ENCODE measurements at regions of chr12 and their contacts with region 1.

Region 1: GRCh38 chr12:129911428-129912049 is 7.7 kb upstream of the TMEM132D start:
- DNase-seq: peak; percentile 37
- H3K4me3 Mint-ChIP-seq: no peak overlapping the region
- H3K27ac Mint-ChIP-seq: no peak overlapping the region
- H3K4me1 Mint-ChIP-seq: no peaks in the 10 kb centered on the region
- H3K27me3 Mint-ChIP-seq: no peaks in the 10 kb centered on the region

Region 2: GRCh38 chr12:128969480-128970055 is 942.0 kb before region 1 on chr12:
- CTCF ChIA-PET with region 1: interaction called, 14 read pairs
- DNase-seq: peak; percentile 37
- H3K4me3 Mint-ChIP-seq: no peak overlapping the region
- H3K27ac Mint-ChIP-seq: no peak overlapping the region
- H3K4me1 Mint-ChIP-seq: no peaks in the 10 kb centered on the region
- H3K27me3 Mint-ChIP-seq: peaks cover 29% of the 10 kb centered on the region

Region 3: GRCh38 chr12:129938089-129938488 is 26.6 kb after region 1 on chr12:
- CTCF ChIA-PET with region 1: no interaction called
- DNase-seq: no peak
- H3K4me3 Mint-ChIP-seq: no peak overlapping the region
- H3K27ac Mint-ChIP-seq: no peak overlapping the region
- H3K4me1 Mint-ChIP-seq: no peaks in the 10 kb centered on the region
- H3K27me3 Mint-ChIP-seq: no peaks in the 10 kb centered on the region

Region 4: DNA sequence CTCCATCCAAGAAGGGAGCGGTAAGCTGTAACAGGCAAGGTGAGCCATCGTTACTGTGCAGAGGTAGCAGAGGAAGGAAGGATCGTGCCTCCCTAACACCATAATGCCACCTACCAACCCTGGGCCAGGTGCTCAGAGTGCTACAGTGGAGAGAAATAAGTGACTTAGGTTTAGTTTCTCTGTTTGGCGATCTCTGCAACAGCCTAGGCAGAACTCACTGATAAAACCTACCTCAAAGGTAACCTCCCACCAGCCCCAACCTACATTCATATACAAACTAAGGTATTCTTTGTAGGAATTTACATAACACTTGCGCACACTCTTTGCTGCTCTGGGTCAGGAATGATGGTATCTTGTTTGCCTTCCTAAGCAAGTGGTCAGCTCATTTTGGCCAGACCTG is 85.7 kb after region 1 on chr12:
- CTCF ChIA-PET with region 1: no interaction called
- DNase-seq: no peak
- H3K4me3 Mint-ChIP-seq: no peak overlapping the region
- H3K27ac Mint-ChIP-seq: no peak overlapping the region
- H3K4me1 Mint-ChIP-seq: no peaks in the 10 kb centered on the region
- H3K27me3 Mint-ChIP-seq: no peaks in the 10 kb centered on the region

Region 5: DNA sequence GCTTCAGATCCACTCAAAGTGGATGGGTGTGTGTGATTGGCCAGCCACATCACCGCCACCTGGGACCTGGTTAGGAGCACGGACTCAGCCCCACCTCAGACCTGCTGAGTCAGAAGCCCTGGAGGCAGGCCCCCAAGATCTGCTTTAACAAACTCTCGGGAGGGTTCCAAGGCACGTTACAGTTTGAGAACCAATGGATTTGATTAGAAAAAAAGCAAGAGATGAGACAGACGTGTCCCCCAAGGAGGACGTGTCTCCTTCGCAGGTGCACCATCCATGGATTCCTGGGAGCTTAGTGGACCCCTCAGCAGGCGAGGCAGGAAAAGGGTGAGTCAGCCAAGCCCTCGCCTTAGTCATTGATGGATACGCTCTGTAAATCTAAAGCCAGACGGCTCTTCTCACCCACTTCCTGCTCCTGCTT is 275.2 kb after region 1 on chr12:
- CTCF ChIA-PET with region 1: no interaction called
- DNase-seq: no peak
- H3K4me3 Mint-ChIP-seq: no peak overlapping the region
- H3K27ac Mint-ChIP-seq: no peak overlapping the region
- H3K4me1 Mint-ChIP-seq: no peaks in the 10 kb centered on the region
- H3K27me3 Mint-ChIP-seq: peaks cover 9% of the 10 kb centered on the region

Measured in activated naive CD4-positive, alpha-beta T cell treated with anti-CD3 and anti-CD28 coated beads, Interleukin-2, amount 10 ng/mL, durations not matched to agents 7 days and 5 days (primary cell).